ENCODE measurements at regions of chr15 and their contacts with region 1.

Region 1: DNA sequence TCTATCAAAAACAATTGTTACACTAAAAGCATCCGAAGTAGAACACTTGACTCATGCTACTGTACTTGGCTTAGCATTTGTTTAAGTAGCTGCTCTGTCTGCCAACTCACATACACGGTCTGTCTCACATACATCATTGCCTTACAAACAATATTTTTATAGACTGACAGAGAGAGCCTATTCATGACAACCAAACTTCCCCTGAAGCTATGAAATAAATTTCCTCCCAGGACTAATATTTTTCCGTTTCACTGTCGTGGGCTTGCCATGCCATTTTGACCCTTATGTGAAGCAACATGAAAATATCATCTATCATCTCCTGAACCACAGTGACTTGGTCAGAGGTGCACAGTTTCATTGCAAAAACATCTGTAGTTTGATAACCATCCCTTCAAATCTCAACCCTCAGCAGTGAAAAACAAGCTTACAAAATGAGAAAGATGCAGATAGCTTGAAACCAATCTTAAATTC is 66.5 kb upstream of the PYGO1 start:
- DNase-seq: no peak
- ATAC-seq: no peak
- H3K4me3 ChIP-seq: no peak overlapping the region
- H3K27ac ChIP-seq: no peak overlapping the region
- H3K4me1 ChIP-seq: no peaks in the 10 kb centered on the region
- H3K27me3 ChIP-seq: no peaks in the 10 kb centered on the region
- CTCF ChIP-seq: no peak

Region 2: DNA sequence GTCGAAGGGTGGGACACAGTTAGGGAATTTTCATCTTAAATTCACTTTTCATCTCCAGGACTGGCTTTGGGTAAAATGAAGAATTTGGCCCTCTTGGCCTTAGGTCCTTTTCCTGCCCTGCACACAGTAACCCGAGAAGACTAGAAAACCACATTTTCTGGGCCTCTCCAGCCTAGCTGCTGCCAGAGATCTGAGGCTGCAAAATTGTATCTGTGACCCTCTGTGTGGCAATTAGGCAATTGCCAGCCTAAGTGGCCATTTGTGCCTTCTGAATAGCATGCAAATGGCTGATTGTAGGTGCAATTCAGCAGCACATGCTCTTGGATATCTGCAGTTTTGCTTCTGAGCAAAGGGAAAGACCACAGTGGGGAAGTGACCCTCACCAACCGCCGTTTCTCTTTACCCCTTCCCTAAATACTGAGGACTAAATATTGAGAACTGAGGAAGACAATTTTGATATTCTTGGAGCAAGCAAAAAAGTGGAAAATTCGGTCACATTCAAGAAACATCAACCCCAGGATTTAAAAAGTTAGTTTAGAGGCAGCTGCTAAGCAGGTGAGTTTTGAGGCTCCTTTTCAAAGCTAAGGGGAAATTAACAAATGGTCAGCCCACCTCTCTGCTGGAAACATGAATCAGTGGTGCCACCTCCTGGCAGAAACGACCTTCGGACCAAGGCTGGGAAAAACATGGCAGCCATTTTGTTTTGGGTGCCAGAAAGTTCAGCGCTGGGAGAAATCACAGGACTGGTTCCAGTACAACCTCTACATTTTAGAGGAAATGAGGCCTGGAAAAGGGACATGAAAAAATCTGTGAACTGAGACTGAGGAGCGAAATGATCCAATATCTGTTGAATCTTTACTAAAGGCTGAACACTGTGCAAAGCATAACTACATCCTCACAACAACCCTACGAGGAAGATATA is 145.0 kb after region 1 on chr15:
- intact Hi-C with region 1: loop called in 1 of 2 experiments (anchors 10 kb)
- DNase-seq: peak in 2 of 4 donors; percentile 43 to 55
- ATAC-seq: peak; percentile 87
- H3K4me3 ChIP-seq: no peak overlapping the region
- H3K27ac ChIP-seq: no peak overlapping the region
- H3K4me1 ChIP-seq: no peaks in the 10 kb centered on the region
- H3K27me3 ChIP-seq: no peaks in the 10 kb centered on the region
- CTCF ChIP-seq: peak; percentile 49 to 50